ENCODE measurements at regions of chr19 and their contacts with region 1.

Region 1: DNA sequence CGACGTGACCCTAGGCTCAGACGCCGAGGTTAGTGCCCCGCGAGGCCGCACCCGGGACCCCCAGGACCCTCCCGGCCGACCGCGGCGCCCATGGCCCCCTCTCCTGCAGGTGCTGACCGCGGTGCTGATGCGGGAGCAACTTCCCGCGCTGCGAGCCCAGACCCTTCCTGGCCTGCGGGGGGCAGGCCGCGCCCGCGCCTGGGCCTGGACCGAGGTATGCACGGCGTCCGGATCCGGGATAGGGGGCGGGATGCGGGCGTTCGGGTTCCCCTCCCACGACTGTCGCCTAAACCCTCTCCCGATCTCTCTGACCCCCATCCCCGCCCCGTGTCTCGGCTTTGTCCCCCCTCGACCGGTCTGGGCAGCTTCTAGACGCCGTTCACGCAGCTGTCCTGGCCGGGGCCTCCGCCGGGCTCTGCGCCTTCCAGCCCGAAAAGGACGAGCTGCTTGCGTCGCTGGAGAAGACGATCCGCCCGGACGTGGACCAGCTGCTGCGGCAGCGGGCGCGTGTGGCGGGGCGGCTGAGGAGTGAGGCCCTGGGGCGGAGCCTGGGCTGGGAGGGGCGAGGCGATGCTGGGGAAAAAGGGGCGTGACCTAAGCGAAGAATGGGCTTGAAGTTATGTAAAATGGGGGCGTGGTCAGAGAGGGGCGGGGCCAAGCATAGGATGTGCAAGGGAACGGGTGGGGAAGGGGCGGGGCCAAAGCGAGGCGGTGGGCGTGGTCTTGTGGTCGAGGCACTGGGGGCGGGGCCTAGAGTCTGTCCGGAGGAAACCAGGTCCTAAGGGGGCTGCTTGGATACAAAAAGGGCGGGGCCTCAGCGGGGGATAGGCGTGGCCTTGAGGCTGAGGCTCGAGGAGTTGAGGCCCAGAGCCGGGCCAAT is 16.0 kb upstream of the COLGALT1 start:
- DNase-seq: peak; percentile 93
- H3K4me3 Mint-ChIP-seq: peak overlapping the region; percentile 84
- H3K27ac Mint-ChIP-seq: peak overlapping the region; percentile 63
- H3K4me1 Mint-ChIP-seq: peaks cover 11% of the 10 kb centered on the region
- H3K27me3 Mint-ChIP-seq: peaks cover 10% of the 10 kb centered on the region

Region 2: GRCh38 chr19:17248011-17248776 is 291.3 kb before region 1 on chr19:
- intact Hi-C with region 1: no loop called
- DNase-seq: no peak
- H3K4me3 Mint-ChIP-seq: no peak overlapping the region
- H3K27ac Mint-ChIP-seq: no peak overlapping the region
- H3K4me1 Mint-ChIP-seq: no peaks in the 10 kb centered on the region
- H3K27me3 Mint-ChIP-seq: peaks cover 14% of the 10 kb centered on the region

Region 3: DNA sequence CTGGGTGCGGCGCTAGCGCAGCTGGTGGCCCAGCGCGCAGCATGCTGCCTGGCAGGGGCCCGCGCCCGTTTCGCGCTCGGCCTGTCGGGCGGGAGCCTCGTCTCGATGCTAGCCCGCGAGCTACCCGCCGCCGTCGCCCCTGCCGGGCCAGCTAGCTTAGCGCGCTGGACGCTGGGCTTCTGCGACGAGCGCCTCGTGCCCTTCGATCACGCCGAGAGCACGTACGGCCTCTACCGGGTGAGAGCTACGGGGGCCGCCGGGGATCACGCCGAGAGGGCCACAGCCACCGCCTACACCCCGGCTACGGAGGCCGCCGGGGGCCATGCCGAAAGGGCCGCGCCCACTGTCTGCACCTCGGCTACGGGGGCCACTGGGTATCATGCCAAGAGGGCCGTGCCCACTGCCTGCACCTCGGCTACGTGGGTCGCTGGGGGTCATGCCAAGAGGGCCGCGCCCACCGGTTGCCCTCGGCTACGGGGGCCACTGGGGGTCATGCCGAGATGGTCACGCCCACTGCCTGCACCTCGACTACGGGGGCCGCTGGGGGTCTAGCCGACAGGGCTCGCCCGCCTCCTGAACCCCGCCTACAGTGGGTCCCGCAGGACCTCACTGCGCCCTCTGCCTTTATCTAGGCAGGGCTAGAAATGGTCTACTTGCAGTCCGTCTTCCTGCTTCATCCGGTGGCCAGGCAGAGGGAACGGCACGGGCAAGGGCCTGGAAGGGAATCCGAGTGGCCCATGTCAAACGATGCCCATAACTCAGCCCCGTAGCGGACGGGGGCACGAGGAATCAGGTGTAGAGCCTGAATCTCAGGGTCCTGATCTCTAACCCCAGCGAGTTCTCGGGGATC is 27.5 kb before region 1 on chr19:
- intact Hi-C with region 1: loop called (anchors 1 kb)
- DNase-seq: peak; percentile 75
- H3K4me3 Mint-ChIP-seq: peak overlapping the region; percentile 99
- H3K27ac Mint-ChIP-seq: peak overlapping the region; percentile 79
- H3K4me1 Mint-ChIP-seq: peaks cover 28% of the 10 kb centered on the region
- H3K27me3 Mint-ChIP-seq: no peaks in the 10 kb centered on the region

Region 4: DNA sequence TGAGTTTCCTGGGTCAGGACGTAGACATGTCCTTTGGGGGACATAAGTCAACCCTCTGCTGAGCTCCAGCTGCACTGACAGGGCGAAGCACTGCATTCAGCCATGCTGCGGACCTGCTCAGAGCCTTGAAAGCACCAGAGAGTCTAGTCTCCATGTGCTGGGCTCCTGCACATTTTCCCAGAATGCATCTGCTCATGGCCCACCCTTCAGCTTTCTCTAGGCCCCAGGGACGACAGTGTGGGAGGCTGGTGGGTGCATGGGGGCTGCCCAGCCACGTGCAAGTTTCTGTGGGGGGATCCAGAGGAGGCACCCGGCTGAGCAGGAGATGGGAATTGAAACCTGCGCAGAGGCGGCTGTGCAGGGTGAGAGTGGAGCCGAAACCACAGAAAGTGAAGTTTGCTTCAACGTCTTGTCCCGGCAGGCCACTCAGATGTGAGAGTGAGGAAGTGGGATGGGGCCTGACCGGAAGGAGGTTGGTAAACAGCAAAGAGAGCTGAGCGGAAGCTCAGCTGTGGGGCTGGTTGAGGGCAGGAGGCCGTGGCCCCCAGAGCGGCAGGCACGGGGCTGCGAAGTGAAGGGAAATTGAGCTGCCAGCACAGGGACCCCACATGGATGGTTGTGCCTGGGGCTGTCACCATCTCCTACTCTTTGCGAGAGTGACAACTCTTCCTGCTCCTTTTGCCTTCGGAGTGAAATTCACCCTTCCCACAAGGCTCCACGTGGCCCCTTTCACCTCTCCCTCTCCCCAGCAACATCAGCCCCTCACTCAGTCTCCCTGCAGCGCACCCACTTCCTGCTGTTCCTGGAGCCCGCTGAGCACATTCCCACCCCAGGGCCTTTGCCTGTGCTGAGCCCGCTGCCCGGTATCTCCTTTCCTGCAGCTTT is 16.2 kb before region 1 on chr19:
- intact Hi-C with region 1: loop called (anchors 1 kb)
- DNase-seq: peak; percentile 36
- H3K4me3 Mint-ChIP-seq: peak overlapping the region; percentile 48
- H3K27ac Mint-ChIP-seq: peak overlapping the region; percentile 71
- H3K4me1 Mint-ChIP-seq: peaks cover 14% of the 10 kb centered on the region
- H3K27me3 Mint-ChIP-seq: peaks cover 4% of the 10 kb centered on the region

Region 5: GRCh38 chr19:17555480-17555928 is 16.0 kb after region 1 on chr19 and contains the start of gene COLGALT1:
- intact Hi-C with region 1: loop called (anchors 1 kb)
- DNase-seq: peak; percentile 97
- H3K4me3 Mint-ChIP-seq: peak within 1 kb of the TSS; percentile 86
- H3K27ac Mint-ChIP-seq: peak within 1 kb of the TSS; percentile 70
- H3K4me1 Mint-ChIP-seq: peaks cover 15% of the 10 kb centered on the region
- H3K27me3 Mint-ChIP-seq: no peaks in the 10 kb centered on the region
- total RNA-seq, gene COLGALT1: 115 and 117 TPM in 2 replicates

Region 6: DNA sequence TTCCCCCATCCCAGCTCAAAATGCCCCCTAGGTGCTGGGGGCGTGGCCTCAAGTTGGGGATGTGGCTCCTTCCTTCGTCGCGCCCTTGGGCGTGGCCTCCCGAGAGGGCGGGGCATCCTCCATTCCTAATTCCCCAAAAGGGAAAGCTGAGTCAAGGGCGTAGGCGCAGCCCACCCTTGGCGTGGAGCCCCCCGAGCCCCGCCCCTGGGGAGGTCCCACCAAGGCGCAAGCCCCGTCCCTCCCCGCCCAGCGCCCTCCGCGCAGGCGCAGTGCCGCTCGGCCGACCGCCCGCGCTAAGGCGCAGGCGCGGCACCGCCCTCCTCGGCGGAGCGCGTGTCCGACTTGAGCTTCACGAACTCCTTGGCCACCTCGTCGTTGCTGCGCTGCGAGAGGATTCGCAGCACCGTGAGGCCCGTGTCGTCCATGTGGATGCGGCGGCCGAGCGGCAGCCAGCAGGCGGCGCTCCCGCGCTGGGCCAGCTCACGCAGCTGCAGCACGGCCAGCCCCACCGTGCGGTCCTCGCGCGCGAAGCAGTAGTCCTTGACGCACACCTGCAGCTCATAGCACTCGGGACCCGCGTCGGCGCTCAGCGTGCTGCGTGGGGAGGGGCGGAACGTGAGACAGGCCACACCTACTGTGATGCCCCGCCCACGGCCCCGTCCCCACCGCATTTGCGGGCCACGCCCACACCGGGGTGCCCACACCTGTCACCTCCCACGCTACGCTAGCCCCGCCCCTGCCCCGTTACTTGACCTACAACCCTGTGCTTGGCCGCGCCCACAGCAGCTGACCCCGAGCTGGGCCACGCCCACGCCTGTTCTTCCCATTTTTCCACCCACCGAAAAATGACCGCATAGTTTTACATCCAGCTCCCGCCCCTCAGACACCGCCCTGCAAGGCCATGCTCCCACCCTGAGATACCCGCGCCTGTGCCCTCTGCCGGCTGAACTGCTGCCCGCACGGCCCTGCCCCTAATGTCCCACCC is 66.6 kb after region 1 on chr19:
- intact Hi-C with region 1: loop called (anchors 1 kb)
- DNase-seq: peak; percentile 74
- H3K4me3 Mint-ChIP-seq: peak overlapping the region; percentile 74
- H3K27ac Mint-ChIP-seq: peak overlapping the region; percentile 70
- H3K4me1 Mint-ChIP-seq: peaks cover 8% of the 10 kb centered on the region
- H3K27me3 Mint-ChIP-seq: peaks cover 37% of the 10 kb centered on the region

Region 7: DNA sequence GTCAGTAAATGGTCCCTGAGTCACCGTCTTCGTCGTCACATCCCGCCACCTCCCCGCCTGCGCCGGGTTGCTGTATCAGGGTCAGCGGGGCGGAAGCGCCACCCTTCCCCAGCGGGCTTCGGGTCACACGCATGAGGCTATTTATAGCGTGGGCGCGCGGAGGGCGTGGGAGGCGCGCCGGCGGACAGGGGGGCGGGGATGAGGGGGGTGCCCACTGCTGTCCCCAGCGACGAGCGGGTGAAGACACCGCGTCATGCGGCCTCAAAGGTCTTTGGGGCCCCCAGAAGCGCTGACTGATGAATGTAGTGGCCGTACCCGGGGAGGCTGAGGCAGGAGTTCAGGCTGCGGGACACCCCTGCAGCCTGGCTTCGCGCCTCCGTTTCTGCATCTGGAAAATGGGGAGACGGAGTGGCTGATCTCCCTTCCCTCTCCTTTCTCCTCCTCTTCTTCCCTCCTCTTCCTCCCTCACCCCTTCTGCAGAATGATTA is 140.8 kb after region 1 on chr19:
- intact Hi-C with region 1: no loop called
- DNase-seq: peak; percentile 19
- H3K4me3 Mint-ChIP-seq: no peak overlapping the region
- H3K27ac Mint-ChIP-seq: no peak overlapping the region
- H3K4me1 Mint-ChIP-seq: peaks cover 4% of the 10 kb centered on the region
- H3K27me3 Mint-ChIP-seq: peaks cover 47% of the 10 kb centered on the region

Region 8: DNA sequence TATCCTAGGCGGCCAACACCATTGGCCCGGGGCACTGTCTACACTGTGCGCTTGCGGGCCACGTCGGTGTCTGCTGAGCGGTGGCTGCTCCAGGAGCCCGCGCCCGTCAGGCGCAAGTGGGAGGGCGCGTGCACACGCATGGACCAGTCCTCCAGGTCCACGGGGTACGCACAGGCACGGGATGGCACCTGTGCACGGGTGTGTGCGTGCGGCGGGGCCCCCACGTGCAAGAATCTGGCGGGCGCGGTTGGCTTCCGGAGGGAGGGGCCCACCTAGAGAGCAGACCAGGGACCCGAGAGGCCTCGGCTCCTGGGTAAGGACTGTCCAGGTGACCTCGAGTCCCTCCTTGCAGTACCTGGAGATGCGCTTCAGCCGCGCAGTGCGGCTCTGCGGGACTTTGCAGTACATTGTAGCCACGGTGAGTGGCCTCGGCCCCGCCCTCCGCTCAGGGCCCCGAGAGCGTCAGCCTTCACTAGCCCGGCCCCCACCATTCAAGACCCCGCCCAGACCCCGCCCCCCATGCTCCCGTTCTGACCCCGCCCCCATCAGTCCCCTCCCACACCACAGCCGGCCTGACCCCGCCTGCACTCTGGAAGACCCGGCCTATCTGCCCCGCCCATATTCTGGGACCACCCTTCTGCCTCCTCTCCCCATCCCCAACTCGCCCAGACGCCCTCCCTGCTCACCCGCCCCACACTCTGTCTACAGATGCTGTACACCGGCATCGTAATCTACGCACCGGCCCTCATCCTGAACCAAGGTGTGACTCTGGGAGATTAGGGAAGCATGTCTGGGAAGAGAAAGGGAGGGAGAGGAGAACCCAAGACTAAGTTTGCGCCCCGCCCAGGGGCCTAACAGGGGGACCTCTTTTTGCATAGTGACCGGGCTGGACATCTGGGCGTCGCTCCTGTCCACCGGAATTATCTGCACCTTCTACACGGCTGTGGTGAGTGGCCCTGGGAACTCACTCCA is 334.6 kb after region 1 on chr19:
- intact Hi-C with region 1: loop called (anchors 1 kb)
- DNase-seq: peak; percentile 50
- H3K4me3 Mint-ChIP-seq: peak overlapping the region; percentile 86
- H3K27ac Mint-ChIP-seq: no peak overlapping the region
- H3K4me1 Mint-ChIP-seq: peaks cover 4% of the 10 kb centered on the region
- H3K27me3 Mint-ChIP-seq: no peaks in the 10 kb centered on the region

Measured in activated T-helper 1 cell treated with anti-CD3 and anti-CD28 coated beads, Interleukin-12 subunit alpha, Interleukin-12 subunit beta, Interleukin-2, Interleukin-4 antibody, amounts not matched to agents 30 ng/mL and 10 ng/mL and 1 ng/mL, durations not matched to agents 14 hours and 24 hours and 36 hours (primary cell).